Spleen (tissue), 13 donors: ENCODE measurements at regions of chr9 and their contacts with region 1.

Region 1: GRCh38 chr9:109574068-109574882 is 76.2 kb upstream of the PTPN3 start:
- DNase-seq: no peak
- H3K4me3 ChIP-seq: no peak overlapping the region
- H3K27ac ChIP-seq: no peak overlapping the region
- H3K4me1 ChIP-seq: no peaks in the 10 kb centered on the region
- H3K27me3 ChIP-seq: no peaks in the 10 kb centered on the region
- CTCF ChIP-seq: peak in 9 of 11 experiments; percentile 16 to 58 (median 42)
- POLR2A ChIP-seq: no peak

Region 2: GRCh38 chr9:109817846-109818472 is 243.7 kb after region 1 on chr9:
- intact Hi-C with region 1: loop called (anchors 10 kb)
- DNase-seq: no peak
- H3K4me3 ChIP-seq: no peak overlapping the region
- H3K27ac ChIP-seq: no peak overlapping the region
- H3K4me1 ChIP-seq: peaks cover 0 to 6% (median 0%) of the 10 kb centered on the region in 6 donors
- H3K27me3 ChIP-seq: peaks cover 0 to 18% (median 0%) of the 10 kb centered on the region in 7 donors
- CTCF ChIP-seq: peak in 10 of 11 experiments; percentile 29 to 68 (median 58)
- POLR2A ChIP-seq: no peak

Region 3: DNA sequence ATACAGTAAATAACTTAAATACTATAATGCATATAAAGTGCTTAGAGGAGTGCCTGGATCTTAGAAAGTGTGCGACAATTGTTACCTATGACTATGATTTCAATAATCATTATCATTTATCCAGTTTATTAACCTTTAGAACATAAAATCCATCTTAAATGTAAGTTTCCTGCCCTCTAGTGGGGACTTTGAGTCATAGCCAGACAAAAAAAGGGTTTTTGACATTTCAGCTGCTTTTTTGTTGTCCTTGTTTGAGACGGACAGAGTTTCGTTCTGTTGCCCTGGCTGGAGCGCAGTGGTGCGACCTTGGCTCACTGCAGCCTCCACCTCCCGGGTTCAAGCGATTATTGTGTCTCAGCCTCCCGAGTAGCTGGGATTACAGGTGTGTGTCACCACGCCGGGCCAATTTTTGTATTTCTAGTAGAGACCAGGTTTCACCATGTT is 643.4 kb after region 1 on chr9:
- intact Hi-C with region 1: loop called (anchors 10 kb)
- DNase-seq: no peak
- H3K4me3 ChIP-seq: no peak overlapping the region
- H3K27ac ChIP-seq: no peak overlapping the region
- H3K4me1 ChIP-seq: no peaks in the 10 kb centered on the region
- H3K27me3 ChIP-seq: no peaks in the 10 kb centered on the region
- CTCF ChIP-seq: peak; percentile 32 to 80 (median 76)
- POLR2A ChIP-seq: no peak